ENCODE measurements at regions of chr18 and their contacts with region 1.

Region 1: GRCh38 chr18:35972197-35973052 is at the start of gene RMP24:
- DNase-seq: peak; percentile 97
- H3K4me3 ChIP-seq: peak within 1 kb of the TSS; percentile 99
- H3K27ac ChIP-seq: peak within 1 kb of the TSS; percentile 66
- H3K4me1 ChIP-seq: peaks cover 17% of the 10 kb centered on the region
- H3K27me3 ChIP-seq: no peaks in the 10 kb centered on the region

Region 2: GRCh38 chr18:34976899-34977837 is 995.3 kb before region 1 on chr18:
- in situ Hi-C with region 1: no loop called
- DNase-seq: peak; percentile 58
- H3K4me3 ChIP-seq: peak overlapping the region; percentile 72
- H3K27ac ChIP-seq: no peak overlapping the region
- H3K4me1 ChIP-seq: peaks cover 10% of the 10 kb centered on the region
- H3K27me3 ChIP-seq: peaks cover 49% of the 10 kb centered on the region

Region 3: DNA sequence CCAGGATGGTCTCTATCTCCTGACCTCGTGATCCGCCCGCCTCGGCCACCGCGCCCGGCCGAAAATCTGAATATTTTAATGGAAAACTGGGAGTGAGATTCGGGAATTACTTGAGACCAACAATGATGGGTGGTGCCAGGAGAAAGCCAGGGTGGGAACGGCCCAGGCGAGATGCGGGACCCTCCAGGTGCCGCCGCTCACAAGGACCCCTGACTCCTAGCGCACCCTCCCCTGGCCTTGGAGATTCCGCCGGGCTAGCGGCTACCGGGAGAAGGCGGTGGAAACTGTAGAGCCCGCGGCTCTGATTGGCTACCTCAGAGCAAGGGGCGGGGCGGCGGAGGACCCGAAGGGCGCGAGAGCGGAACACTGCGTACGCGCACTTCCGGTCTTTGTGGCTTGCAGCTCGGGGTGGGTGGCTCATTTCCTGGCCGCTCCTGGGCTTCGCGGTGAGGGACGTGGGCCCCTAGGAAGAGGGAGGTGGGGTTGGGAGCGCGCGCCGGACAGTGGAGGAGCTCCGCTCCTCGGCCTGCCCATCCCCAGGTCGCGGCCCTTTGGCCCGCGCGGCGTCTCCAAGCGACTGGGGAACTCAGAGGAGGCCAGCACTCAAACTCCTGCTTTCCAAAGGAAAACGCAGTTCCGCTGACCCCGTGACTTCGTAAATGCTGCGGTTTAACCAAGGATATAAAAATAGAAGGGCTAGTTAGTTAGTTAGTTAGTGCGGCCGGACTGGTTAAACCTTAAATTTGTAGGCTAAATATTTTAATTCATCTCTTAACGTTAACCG is 731.6 kb before region 1 on chr18 and contains the start of gene ZNF397:
- in situ Hi-C with region 1: loop called (anchors 25 kb)
- DNase-seq: peak; percentile 100
- H3K4me3 ChIP-seq: peak within 1 kb of the TSS; percentile 97
- H3K27ac ChIP-seq: peak within 1 kb of the TSS; percentile 97
- H3K4me1 ChIP-seq: peaks cover 6% of the 10 kb centered on the region; the same call in 1 of the 2 replicates
- H3K27me3 ChIP-seq: no peaks in the 10 kb centered on the region
- total RNA-seq, gene ZNF397: 8.7 and 10.6 TPM in 2 replicates